Mammary epithelial cell (primary cell): ENCODE measurements at regions of chr11 and their contacts with region 1.

Region 1: DNA sequence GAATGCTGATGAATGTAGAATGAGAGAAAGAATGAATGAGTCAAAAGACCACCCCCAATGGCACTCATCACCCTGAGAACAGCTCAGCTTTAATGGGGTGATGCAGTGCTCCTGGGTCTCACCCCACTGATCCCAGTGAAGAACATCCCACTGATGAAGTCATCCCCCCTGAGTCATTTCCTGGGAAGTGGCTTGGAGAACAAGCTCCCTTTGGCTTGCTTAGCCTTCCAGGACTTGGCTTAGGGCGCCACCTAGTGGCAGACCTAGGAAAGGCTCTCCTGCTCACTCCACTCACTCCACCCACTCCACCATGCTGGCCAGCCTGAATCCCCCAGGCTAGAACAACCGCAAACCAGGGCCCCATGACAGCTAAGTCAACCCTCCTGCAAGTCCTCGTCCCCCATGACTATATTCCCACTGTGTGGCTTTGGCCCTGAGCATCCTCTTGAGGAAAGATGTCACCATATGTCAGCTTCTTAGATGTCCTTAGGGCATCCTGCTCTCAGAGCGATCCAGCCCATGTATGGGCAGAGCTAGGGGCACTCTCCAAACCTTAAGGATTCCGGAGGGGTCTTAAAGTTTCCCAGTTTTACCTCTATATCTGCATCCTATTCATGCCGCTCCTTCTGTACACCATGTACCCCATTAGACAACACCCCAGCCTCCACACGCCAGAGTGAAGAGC is 17.8 kb upstream of the TMPRSS13 start:
- DNase-seq: peak; percentile 90
- H3K4me3 ChIP-seq: no peak overlapping the region
- H3K27ac ChIP-seq: no peak overlapping the region
- H3K4me1 ChIP-seq: peaks cover 7% of the 10 kb centered on the region
- H3K27me3 ChIP-seq: no peaks in the 10 kb centered on the region
- CTCF ChIP-seq: peak; percentile 92 to 98

Region 2: DNA sequence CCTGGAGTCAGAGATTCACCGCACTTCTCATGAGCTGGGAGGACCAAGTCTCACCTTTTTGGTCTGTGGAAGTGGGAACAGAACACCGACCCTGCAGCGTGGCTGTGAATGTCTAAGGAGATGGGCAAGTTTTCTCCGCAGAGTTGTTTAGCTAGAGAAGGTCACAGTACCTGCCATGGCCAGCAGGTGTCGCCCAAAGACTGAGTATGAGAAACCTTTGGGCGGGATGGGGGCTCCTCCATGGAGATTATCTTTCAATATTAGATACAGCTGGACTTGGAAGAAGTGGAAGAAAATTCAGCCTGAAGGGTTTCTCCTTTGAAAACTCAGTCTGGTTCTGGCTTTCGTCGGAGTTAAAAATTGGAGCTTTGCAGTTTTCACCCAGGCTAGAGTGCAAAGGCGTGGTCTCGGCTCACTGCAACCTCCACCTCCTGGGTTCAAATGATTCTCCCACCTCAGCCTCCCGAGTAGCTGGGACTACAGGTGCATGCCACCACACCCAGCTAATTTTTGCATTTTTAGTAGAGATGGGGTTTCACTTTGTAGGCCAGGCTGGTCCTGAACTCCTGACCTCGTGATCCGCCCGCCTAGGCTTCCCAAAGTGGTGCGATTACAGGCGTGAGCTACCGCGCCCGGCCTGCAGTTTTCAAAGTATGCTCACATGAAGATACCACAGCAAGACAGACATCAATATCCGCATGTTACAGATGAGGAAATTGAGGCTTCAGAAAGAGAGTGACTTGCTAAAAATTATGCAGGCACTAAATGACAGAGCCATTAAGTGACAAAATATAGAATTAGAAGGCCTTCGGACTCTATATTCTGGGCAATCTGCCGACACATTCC is 139.3 kb before region 1 on chr11:
- CTCF ChIA-PET with region 1: interaction called, 11 read pairs
- dilution Hi-C with region 1: no loop called
- in situ Hi-C with region 1: no loop called
- intact Hi-C with region 1: loop called (anchors 1 kb)
- DNase-seq: no peak
- H3K4me3 ChIP-seq: no peak overlapping the region
- H3K27ac ChIP-seq: no peak overlapping the region
- H3K4me1 ChIP-seq: peaks cover 8% of the 10 kb centered on the region
- H3K27me3 ChIP-seq: no peaks in the 10 kb centered on the region
- CTCF ChIP-seq: peak; percentile 93

Region 3: DNA sequence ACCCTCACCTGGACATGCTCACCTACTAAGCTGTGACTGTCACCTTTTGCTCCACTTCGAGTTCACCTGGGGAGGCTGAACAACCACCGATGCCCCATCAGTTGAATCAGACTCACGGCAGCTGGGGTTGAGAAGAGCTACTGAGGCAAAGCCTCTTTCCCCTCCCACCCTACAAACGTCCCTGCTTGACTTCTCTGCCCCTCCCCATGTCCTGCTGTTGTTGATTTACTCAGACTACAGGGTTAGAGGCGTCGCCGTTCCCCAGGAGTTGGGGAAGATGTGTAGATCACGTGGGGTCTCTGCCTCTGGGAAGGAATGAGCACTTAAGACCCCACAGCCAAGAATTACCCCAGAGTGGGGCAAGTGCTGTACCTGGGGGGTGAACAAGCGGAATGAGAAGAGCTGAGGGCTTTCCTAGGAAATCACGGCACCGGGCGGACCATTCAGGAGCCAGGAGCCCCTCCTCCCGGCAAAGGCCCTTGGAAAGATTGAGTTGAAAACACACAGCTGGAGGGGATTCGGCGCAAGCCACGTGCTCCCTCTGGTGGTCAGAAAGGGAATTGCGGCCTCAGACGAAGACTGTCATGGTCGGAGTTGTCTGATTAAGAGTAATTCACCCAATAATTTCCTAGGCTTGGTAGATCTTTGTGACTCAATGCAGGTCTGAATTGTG is 129.5 kb before region 1 on chr11:
- CTCF ChIA-PET with region 1: interaction called, 7 read pairs
- dilution Hi-C with region 1: no loop called
- in situ Hi-C with region 1: no loop called
- intact Hi-C with region 1: loop called (anchors 1 kb)
- DNase-seq: peak; percentile 63
- H3K4me3 ChIP-seq: no peak overlapping the region
- H3K27ac ChIP-seq: no peak overlapping the region
- H3K4me1 ChIP-seq: peaks cover 10% of the 10 kb centered on the region
- H3K27me3 ChIP-seq: no peaks in the 10 kb centered on the region
- CTCF ChIP-seq: peak; percentile 99 to 100

Region 4: DNA sequence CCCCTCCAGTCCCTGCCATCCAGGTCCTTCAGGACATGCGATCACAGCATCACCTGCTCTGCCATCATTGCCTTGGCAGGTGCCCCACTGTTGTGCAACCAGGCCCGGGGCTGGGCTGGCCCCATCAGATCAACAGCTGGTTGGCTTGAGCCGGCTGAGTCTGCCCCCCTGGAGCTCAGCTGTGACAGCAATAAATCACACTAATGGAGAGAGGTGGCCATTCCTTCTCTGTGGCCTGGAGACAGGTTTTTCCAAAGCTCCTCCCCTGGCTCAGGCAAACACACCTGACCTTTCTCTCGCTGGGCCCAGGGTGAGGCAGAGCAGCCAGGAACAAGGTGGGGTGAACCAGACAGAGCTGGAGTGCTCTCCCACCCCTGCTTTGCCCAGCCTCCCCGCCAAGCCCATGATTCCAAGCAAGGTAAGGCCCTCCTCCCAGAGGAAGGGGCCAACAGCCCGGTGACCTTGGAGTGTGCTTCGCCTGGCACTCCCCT is 113.5 kb before region 1 on chr11:
- CTCF ChIA-PET with region 1: no interaction called
- dilution Hi-C with region 1: no loop called
- in situ Hi-C with region 1: loop called (anchors 5 kb)
- intact Hi-C with region 1: no loop called
- DNase-seq: no peak
- H3K4me3 ChIP-seq: no peak overlapping the region
- H3K27ac ChIP-seq: no peak overlapping the region
- H3K4me1 ChIP-seq: peaks cover 10% of the 10 kb centered on the region
- H3K27me3 ChIP-seq: no peaks in the 10 kb centered on the region
- CTCF ChIP-seq: no peak

Region 5: DNA sequence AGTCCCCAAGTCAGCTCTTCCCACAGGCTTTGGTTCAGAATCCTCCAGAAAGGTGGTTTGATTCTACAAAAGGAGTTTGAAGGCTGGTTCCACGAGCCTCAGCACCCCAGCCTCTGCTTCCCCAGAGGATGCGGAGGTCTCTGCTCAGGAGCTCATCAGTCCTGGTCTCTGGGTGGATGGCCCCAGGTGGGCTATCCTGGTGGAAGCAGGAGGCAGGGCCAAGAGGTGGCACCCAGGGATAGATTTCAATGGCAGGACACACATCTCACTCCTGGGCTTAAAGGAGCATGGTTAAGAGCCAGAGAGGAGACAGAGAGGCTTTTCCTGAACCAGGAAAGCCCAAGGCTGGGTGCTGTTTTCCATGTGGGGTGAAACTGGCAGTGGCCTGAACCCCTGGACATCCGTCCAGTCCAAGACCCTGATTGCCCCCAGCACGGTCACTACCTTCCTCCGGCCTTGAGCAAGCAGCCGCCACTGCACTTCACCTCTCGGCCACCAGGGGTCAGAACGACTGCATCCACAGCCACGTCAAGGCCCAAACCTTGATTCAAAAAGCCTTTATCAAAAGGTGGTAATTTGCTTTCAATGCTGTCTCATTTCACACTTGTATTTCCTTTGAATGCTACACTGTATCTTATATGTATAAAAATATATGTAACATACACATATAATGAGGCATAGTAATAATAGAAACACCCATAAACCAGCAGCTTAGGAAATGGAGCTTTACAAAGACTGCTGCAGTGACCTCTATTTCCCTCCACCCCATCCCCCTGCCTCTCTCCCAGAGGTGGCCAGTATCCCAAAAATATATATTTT is 103.1 kb before region 1 on chr11:
- CTCF ChIA-PET with region 1: interaction called, 31 read pairs
- dilution Hi-C with region 1: loop called (anchors 5 kb)
- in situ Hi-C with region 1: loop called (anchors 5 kb)
- intact Hi-C with region 1: loop called (anchors 1 kb)
- DNase-seq: peak; percentile 24
- H3K4me3 ChIP-seq: no peak overlapping the region
- H3K27ac ChIP-seq: no peak overlapping the region
- H3K4me1 ChIP-seq: no peaks in the 10 kb centered on the region
- H3K27me3 ChIP-seq: no peaks in the 10 kb centered on the region
- CTCF ChIP-seq: peak; percentile 94 to 98

Region 6: DNA sequence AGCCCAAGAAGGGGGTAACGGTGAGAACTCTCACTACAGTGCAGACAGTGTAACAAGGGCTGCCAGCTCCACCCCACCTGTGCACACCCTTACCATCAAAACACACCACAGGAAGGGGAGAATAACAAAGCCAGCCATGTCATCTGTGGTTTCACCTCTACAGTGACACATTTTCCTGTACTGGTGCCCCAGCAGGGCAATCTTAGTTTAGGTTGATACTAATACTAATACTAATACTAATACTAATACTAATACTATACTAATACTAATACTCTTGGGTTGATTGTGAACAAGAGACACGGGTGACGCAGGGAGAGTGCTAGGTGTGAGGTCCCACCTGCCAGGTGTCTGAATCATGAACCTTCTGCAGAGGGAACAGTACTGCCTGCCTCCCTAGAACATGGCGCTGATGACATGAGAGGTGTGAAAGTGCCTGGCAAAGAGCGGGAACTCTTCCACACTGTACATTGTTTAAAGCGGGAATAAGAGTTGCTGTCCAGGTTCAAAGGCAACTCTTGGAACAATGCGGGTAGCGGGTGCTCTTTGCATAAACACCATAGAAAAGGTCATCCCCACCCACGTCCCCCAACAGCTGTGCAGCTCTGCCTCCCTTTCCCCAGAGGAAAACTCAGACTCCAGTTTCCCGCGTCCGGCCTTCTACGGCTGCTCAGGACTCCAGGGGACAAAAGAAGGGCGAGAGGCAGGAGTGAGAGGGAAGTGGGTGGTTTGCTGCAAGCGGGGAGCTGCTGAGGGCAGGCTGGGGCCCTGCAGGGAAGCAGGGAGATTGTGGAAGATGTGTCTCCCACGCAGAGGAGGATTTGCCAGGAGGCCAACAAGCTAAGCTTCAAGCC is 104.9 kb after region 1 on chr11:
- CTCF ChIA-PET with region 1: interaction called, 6 read pairs
- dilution Hi-C with region 1: no loop called
- in situ Hi-C with region 1: loop called (anchors 10 kb)
- intact Hi-C with region 1: loop called (anchors 1 kb)
- DNase-seq: no peak
- H3K4me3 ChIP-seq: no peak overlapping the region
- H3K27ac ChIP-seq: no peak overlapping the region
- H3K4me1 ChIP-seq: no peaks in the 10 kb centered on the region
- H3K27me3 ChIP-seq: no peaks in the 10 kb centered on the region
- CTCF ChIP-seq: no peak